Activated naive CD4-positive, alpha-beta T cell treated with anti-CD3 and anti-CD28 coated beads for 36 hours (primary cell): ENCODE measurements at regions of chr2 and their contacts with region 1.

Region 1: GRCh38 chr2:198017068-198017467 is 212.7 kb downstream of the PLCL1 start:
- DNase-seq: no peak
- H3K4me3 Mint-ChIP-seq: no peak overlapping the region
- H3K27ac Mint-ChIP-seq: no peak overlapping the region
- H3K4me1 Mint-ChIP-seq: peaks cover 50% of the 10 kb centered on the region
- H3K27me3 Mint-ChIP-seq: no peaks in the 10 kb centered on the region

Region 2: GRCh38 chr2:198036029-198036879 is 19.2 kb after region 1 on chr2:
- CTCF ChIA-PET with region 1: interaction called, 3 read pairs
- intact Hi-C with region 1: loop called (anchors 1 kb)
- DNase-seq: no peak
- H3K4me3 Mint-ChIP-seq: no peak overlapping the region
- H3K27ac Mint-ChIP-seq: no peak overlapping the region
- H3K4me1 Mint-ChIP-seq: peaks cover 34% of the 10 kb centered on the region
- H3K27me3 Mint-ChIP-seq: no peaks in the 10 kb centered on the region

Region 3: DNA sequence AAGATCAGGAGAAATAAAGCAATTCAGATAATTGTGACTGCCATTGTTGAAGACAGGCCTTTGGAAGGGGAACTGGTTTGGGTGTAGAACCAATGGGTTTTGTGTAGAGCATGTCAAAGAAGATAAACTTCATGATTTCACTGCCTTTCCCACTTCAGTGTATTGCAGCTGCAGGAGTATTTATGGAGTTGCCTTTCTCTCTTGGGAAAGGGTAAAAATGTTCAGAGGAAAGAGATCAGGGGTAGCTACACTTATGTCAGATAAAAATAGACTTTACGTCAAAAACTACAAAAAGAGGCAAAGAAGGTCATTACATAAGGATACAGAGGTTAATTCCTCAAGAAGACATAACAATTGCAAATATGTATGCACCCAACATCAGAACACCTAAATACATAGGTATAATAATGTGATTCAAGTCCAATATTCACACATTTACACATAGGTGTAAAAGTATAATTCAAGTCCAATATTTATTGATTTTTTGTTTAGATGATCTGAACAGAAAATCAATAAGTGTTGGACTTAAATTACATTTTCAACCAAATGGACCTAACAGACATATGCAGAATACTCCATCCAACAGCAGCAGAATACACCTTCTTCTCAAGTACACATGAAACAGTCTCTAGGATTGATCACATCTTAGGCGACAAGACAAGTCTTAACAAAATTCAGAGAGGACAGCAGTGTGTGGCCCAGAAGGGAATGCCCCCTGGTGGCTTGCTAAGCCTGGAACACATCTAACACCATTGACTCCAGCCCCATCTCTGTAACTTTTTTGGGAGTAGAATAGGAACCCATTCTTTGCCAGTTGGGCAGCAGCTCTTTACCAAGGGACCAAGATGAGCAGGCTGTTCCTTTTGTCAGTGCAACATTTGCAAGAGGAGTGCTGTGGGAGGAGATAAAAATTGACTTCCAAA is 37.0 kb after region 1 on chr2:
- CTCF ChIA-PET with region 1: no interaction called
- intact Hi-C with region 1: no loop called
- DNase-seq: peak; percentile 71
- H3K4me3 Mint-ChIP-seq: no peak overlapping the region
- H3K27ac Mint-ChIP-seq: no peak overlapping the region
- H3K4me1 Mint-ChIP-seq: peaks cover 27% of the 10 kb centered on the region
- H3K27me3 Mint-ChIP-seq: no peaks in the 10 kb centered on the region

Region 4: GRCh38 chr2:198173242-198173641 is 156.2 kb after region 1 on chr2:
- CTCF ChIA-PET with region 1: no interaction called
- intact Hi-C with region 1: no loop called
- DNase-seq: no peak
- H3K4me3 Mint-ChIP-seq: no peak overlapping the region
- H3K27ac Mint-ChIP-seq: no peak overlapping the region
- H3K4me1 Mint-ChIP-seq: no peaks in the 10 kb centered on the region
- H3K27me3 Mint-ChIP-seq: peaks cover 2% of the 10 kb centered on the region

Region 5: DNA sequence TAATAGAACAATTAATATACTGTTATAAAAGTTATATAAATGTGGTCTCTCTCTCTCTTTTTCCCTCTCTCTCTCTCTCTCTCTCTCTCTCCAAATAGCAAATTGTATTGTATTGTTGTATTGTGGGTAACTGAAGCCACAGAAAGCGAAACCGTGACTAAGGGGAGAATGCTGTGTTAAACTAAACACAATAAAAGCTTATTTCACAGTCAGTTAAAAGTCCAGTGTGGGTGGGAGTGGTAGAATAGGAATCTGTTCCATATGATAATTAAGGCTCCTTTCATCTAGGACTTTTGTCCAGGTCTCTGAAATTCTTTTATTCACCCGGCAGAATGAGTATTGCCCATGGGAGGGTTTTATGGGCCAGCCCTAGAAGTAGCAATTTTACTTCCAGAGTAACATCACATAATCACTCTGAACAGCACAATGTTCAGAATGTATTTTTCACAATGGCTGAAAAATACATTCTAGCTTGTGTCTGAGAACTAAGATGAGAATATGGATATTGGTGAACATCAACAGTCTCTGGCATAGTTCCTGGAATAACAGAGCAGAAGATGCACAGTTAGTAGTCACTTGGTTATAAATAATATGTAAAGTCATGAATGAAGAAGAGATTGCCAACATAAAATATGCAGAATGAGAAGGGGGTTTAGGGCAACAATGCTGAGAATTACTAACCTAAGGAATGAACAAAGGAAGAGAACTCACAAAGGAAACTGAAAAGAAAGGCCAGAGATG is 186.4 kb after region 1 on chr2:
- CTCF ChIA-PET with region 1: no interaction called
- intact Hi-C with region 1: no loop called
- DNase-seq: no peak
- H3K4me3 Mint-ChIP-seq: no peak overlapping the region
- H3K27ac Mint-ChIP-seq: no peak overlapping the region
- H3K4me1 Mint-ChIP-seq: no peaks in the 10 kb centered on the region
- H3K27me3 Mint-ChIP-seq: peaks cover 3% of the 10 kb centered on the region

Region 6: DNA sequence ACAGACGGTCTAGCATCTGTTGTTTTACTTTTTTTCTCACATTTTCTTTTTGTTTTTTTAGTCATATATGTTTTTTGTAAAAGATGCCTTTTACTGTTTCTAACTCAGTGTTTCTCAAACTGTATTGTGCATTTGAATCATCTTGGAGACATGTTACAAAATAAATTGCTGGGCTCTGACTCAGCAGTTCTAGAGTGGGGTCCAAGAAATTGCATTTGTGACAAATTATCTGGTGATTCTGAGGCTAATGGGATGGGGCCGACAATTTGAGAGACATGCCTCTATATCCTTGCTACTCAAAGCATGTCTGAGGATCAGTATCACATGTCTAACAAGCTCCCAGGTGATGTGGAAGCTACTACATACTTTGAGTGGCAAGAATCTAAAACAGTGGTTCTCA is 266.1 kb after region 1 on chr2:
- CTCF ChIA-PET with region 1: no interaction called
- intact Hi-C with region 1: no loop called
- DNase-seq: no peak
- H3K4me3 Mint-ChIP-seq: no peak overlapping the region
- H3K27ac Mint-ChIP-seq: no peak overlapping the region
- H3K4me1 Mint-ChIP-seq: no peaks in the 10 kb centered on the region
- H3K27me3 Mint-ChIP-seq: peaks cover 20% of the 10 kb centered on the region